GM10248 (cell line): ENCODE measurements at regions of chr12 and their contacts with region 1.

Region 1: DNA sequence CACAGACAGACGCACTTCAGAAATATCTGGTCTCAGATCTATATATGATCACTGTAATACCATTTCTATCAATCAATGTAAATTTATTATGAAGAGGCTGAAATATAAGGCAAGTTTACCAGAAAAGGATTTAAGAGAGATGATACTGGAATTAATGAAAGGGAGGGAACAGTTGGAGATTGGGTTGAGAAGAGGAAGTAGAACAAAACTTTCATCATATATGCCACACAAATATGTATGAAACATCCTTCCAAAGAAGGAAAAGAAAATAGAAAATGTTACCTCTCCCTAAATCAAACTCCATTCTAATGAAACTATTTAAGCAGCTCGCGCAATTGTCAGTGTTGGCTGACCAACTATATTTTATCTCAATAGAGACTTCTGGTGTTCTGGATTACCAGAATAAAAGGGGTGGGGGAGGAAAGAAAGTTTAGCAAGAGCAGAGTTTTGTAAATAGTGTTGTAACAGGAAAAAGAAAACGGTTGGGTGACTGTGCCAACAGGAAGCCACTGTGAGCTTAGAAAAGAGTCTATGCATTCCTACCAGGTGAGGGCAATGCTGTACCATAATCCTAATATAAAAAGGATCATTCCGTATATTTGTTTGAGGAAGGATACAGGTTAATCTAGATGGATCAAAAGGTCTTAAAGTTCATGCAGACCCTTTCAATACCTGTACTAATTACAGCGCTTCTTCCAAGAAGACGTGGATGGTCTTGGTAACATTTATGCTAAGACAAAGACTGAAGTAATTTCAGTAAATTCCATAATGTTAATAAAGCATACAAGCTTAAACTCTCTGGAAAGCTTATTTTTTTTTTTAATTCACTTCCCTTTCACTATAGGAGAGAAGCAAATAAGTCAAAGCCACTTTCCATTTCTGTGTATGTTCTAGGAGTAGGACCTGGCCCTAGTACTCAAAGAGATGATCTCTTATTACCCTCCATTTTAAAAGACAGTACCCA is 14.5 kb upstream of the LLPH start:
- DNase-seq: no peak
- CTCF ChIP-seq: no peak

Region 2: DNA sequence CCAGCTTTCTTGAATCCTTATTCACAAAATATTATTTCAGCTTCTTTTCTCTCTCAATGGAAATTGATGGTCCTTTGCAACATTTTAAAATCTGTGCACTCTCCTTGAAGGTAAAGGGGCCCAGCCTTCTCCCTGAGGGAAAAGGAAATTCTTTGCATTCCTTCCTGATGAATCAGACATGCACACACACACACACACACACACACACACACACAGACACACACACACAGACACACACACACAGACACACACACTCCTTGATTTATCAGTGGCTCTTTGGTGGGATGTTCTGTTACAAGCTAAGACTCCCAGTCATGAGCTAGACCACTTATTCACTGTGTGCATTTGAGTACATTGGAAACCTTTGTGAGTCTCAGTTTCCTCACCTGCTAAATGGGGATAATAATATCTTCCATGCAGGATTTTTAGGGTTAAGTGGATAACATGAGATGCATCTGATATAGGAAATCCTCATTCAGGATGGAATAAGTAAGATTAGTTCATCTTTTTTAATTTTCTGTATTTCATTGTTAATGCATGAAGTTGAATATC is 365.9 kb before region 1 on chr12:
- CTCF ChIA-PET with region 1: no interaction called
- POLR2A ChIA-PET with region 1: no interaction called
- DNase-seq: no peak
- CTCF ChIP-seq: no peak

Region 3: GRCh38 chr12:66160704-66161103 is 15.6 kb after region 1 on chr12:
- CTCF ChIA-PET with region 1: interaction called, 17 read pairs
- POLR2A ChIA-PET with region 1: no interaction called
- DNase-seq: no peak
- CTCF ChIP-seq: no peak